HCT116 (cell line): ENCODE measurements at regions of chr3 and their contacts with region 1.

Region 1: DNA sequence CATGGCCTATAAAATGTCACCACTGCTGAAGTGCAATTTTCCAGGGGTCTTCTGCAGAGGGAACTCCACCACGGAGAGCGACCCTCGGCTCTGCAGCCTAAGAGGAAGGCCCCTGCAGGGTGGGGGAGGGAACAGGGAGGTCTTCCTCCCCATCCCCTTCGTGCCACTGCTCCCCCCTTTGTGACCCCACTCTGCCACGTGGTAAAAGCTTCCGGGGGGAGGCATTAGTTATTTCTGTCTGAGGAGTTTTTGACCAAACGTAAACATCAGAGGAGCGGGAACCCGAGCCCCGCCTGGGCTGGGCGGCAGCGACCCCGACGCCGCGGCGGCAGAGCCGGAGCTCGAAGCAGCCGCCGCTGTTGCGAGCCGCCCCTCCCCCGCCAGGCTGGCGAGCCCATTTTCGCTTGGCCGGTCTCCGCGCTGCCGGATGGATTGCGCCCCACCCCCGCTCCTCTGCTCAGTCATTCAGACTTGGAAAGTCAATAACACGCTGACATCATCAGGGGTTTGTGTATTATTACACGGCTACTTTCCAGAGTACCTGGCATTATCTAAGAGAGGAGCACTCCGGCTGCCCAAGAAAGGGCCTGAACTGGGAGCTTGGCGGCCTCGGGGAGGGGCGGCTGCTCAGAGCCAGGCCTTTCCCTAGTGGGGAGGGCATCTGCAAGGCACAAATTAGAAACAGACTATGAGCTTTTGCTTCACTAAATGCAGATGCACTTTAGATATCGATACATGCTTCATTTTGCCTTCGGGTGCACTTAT is 162.5 kb upstream of the TBL1XR1 start:
- DNase-seq: peak; percentile 98
- ATAC-seq: peak; percentile 62
- H3K4me3 ChIP-seq: peak overlapping the region; percentile 17 to 50
- H3K27ac ChIP-seq: peak overlapping the region; percentile 97
- H3K4me1 ChIP-seq: peaks cover 56 to 74% of the 10 kb centered on the region in 2 experiments
- H3K27me3 ChIP-seq: no peaks in the 10 kb centered on the region
- CTCF ChIP-seq: no peak
- POLR2A ChIP-seq: no peak
- RAD21 ChIP-seq: no peak

Region 2: DNA sequence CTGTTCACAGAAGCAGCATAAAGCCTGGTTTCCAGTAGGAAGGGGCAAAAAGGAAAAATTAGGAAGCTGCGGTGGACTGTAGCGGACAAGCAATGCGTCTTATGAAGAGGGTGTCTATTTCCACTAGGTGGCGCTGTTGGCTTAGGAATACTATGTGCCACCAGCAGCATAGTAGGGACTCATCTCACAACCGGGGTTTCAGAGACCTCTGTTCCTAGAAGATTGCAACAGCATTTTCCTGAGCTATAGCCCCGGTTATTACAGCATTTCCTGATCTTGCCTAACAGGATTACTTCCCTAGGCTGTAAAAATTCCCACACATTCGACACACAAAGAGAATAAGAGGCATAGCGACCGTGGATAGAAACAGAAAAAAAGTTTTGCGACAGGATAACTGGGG is 845.5 kb before region 1 on chr3:
- CTCF ChIA-PET with region 1: no interaction called
- POLR2A ChIA-PET with region 1: no interaction called
- RAD21 ChIA-PET with region 1: no interaction called
- intact Hi-C with region 1: loop called (anchors 10 kb)
- DNase-seq: peak; percentile 62
- ATAC-seq: peak; percentile 96
- H3K4me3 ChIP-seq: no peak overlapping the region
- H3K27ac ChIP-seq: no peak overlapping the region
- H3K4me1 ChIP-seq: no peaks in the 10 kb centered on the region
- H3K27me3 ChIP-seq: no peaks in the 10 kb centered on the region
- CTCF ChIP-seq: peak; percentile 56 to 83 (median 65); a peak in 5 of 6 replicates
- POLR2A ChIP-seq: no peak
- RAD21 ChIP-seq: peak; percentile 93

Region 3: GRCh38 chr3:177197041-177197727 is 162.6 kb before region 1 on chr3 and contains the start of gene TBL1XR1:
- CTCF ChIA-PET with region 1: interaction called, 5 read pairs
- POLR2A ChIA-PET with region 1: interaction called, 50 read pairs
- RAD21 ChIA-PET with region 1: interaction called, 8 to 10 read pairs
- intact Hi-C with region 1: loop called (anchors 1 kb)
- DNase-seq: peak; percentile 82
- ATAC-seq: peak; percentile 76
- H3K4me3 ChIP-seq: peak within 1 kb of the TSS; percentile 87 to 95
- H3K27ac ChIP-seq: peak within 1 kb of the TSS; percentile 86
- H3K4me1 ChIP-seq: peaks cover 25 to 42% of the 10 kb centered on the region in 2 experiments
- H3K27me3 ChIP-seq: no peaks in the 10 kb centered on the region
- CTCF ChIP-seq: no peak
- POLR2A ChIP-seq: no peak
- RAD21 ChIP-seq: peak; percentile 30
- total RNA-seq, gene TBL1XR1: 180 TPM

Region 4: GRCh38 chr3:177345049-177345972 is 14.5 kb before region 1 on chr3:
- CTCF ChIA-PET with region 1: interaction called, 3 read pairs
- POLR2A ChIA-PET with region 1: interaction called, 49 read pairs
- RAD21 ChIA-PET with region 1: interaction called, 3 to 4 read pairs
- intact Hi-C with region 1: loop called (anchors 1 kb)
- DNase-seq: peak; percentile 96
- ATAC-seq: peak; percentile 92
- H3K4me3 ChIP-seq: peak overlapping the region; percentile 8 to 36; a peak in 2 of 4 replicates
- H3K27ac ChIP-seq: peak overlapping the region; percentile 91
- H3K4me1 ChIP-seq: peaks cover 35 to 55% of the 10 kb centered on the region in 2 experiments
- H3K27me3 ChIP-seq: no peaks in the 10 kb centered on the region
- CTCF ChIP-seq: no peak
- POLR2A ChIP-seq: peak; percentile 68
- RAD21 ChIP-seq: peak; percentile 52

Region 5: GRCh38 chr3:177777699-177778098 is 417.9 kb after region 1 on chr3:
- CTCF ChIA-PET with region 1: no interaction called
- POLR2A ChIA-PET with region 1: no interaction called
- RAD21 ChIA-PET with region 1: no interaction called
- intact Hi-C with region 1: loop called (anchors 1 kb)
- DNase-seq: peak; percentile 51
- ATAC-seq: peak; percentile 95
- H3K4me3 ChIP-seq: no peak overlapping the region
- H3K27ac ChIP-seq: no peak overlapping the region
- H3K4me1 ChIP-seq: peaks cover 0 to 8% of the 10 kb centered on the region in 2 experiments; a peak in 1 of 4 replicates
- H3K27me3 ChIP-seq: no peaks in the 10 kb centered on the region
- CTCF ChIP-seq: peak; percentile 22 to 74 (median 69); a peak in 5 of 6 replicates
- POLR2A ChIP-seq: no peak
- RAD21 ChIP-seq: peak; percentile 81